ENCODE measurements at regions of chr1 and their contacts with region 1.

Region 1: GRCh38 chr1:115469703-115470476 is 131.8 kb upstream of the NGF start:
- DNase-seq: peak; percentile 21
- H3K4me3 ChIP-seq: no peak overlapping the region
- H3K27ac ChIP-seq: no peak overlapping the region
- H3K4me1 ChIP-seq: no peaks in the 10 kb centered on the region
- H3K27me3 ChIP-seq: no peaks in the 10 kb centered on the region
- CTCF ChIP-seq: peak; percentile 85 to 88
- POLR2A ChIP-seq: no peak

Region 2: DNA sequence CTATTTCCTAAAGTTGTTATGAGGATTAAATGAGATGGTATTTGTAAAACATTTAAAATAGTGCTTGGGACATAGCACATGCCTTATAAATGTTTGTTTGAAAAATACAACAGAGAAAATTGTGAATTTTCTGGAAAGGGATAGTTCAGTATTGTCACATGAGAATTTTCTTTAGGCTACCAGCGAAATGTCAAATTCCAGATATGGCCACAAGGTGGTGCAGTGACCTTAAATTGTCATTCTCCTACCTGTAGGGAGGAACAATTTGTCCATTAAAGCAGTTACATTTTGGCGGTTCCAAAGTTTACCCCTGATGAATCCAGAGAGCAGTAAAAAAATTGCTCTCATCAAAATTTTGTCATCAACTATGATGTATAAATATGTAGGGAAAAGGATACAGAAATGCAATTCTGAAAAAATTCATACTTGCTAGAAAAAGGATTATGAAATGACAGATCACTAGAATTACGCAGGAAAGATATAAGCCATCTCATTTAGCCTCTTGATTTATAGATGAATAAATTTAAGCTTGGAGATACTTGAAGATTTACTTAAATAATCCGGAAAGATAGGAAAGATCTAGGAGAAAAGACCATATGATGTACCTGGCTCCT is 490.5 kb before region 1 on chr1:
- CTCF ChIA-PET with region 1: interaction called, 4 read pairs
- POLR2A ChIA-PET with region 1: no interaction called
- dilution Hi-C with region 1: no loop called
- intact Hi-C with region 1: loop called (anchors 10 kb)
- DNase-seq: peak; percentile 54
- H3K4me3 ChIP-seq: no peak overlapping the region
- H3K27ac ChIP-seq: no peak overlapping the region
- H3K4me1 ChIP-seq: no peaks in the 10 kb centered on the region
- H3K27me3 ChIP-seq: peaks cover 0 to 14% of the 10 kb centered on the region in 2 experiments
- CTCF ChIP-seq: peak; percentile 50 to 60
- POLR2A ChIP-seq: no peak

Region 3: GRCh38 chr1:115138968-115139367 is 330.9 kb before region 1 on chr1:
- CTCF ChIA-PET with region 1: interaction called, 165 read pairs
- POLR2A ChIA-PET with region 1: no interaction called
- dilution Hi-C with region 1: no loop called
- intact Hi-C with region 1: loop called (anchors 1 kb)
- DNase-seq: peak; percentile 79
- H3K4me3 ChIP-seq: no peak overlapping the region
- H3K27ac ChIP-seq: no peak overlapping the region
- H3K4me1 ChIP-seq: no peaks in the 10 kb centered on the region
- H3K27me3 ChIP-seq: peaks cover 0 to 2% of the 10 kb centered on the region in 2 experiments
- CTCF ChIP-seq: peak; percentile 90 to 92
- POLR2A ChIP-seq: no peak

Region 4: GRCh38 chr1:115275212-115275611 is 194.7 kb before region 1 on chr1:
- CTCF ChIA-PET with region 1: interaction called, 9 read pairs
- POLR2A ChIA-PET with region 1: no interaction called
- dilution Hi-C with region 1: no loop called
- intact Hi-C with region 1: loop called (anchors 1 kb)
- DNase-seq: peak; percentile 14
- H3K4me3 ChIP-seq: no peak overlapping the region
- H3K27ac ChIP-seq: no peak overlapping the region
- H3K4me1 ChIP-seq: no peaks in the 10 kb centered on the region
- H3K27me3 ChIP-seq: no peaks in the 10 kb centered on the region
- CTCF ChIP-seq: peak; percentile 24 to 40
- POLR2A ChIP-seq: no peak

Region 5: DNA sequence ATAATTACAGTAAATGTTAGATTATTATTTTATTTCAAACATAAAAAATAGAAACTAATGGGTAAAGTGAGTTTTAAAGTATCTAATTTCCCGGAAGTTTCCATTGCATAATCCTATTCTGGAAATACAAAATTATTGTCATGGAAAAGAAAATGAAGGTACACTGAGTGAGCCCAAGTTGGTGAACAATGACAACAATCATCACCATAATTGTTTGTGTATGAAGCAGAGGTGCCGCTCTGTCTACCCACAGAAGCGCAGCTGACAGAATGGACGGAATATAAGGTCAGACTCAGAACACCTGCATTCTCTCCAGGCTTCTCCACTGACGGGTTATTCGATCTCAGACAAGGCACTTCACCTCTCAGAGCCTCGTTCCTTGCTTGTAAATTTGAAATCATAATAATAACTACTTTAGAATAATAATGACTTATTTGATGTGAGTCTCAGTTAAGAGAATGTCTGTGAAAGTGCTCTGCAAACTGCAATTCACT is 32.7 kb before region 1 on chr1:
- CTCF ChIA-PET with region 1: no interaction called
- POLR2A ChIA-PET with region 1: no interaction called
- dilution Hi-C with region 1: no loop called
- intact Hi-C with region 1: no loop called
- DNase-seq: no peak
- H3K4me3 ChIP-seq: no peak overlapping the region
- H3K27ac ChIP-seq: no peak overlapping the region
- H3K4me1 ChIP-seq: no peaks in the 10 kb centered on the region
- H3K27me3 ChIP-seq: no peaks in the 10 kb centered on the region
- CTCF ChIP-seq: no peak
- POLR2A ChIP-seq: no peak

Region 6: GRCh38 chr1:115448282-115449044 is 21.4 kb before region 1 on chr1:
- CTCF ChIA-PET with region 1: interaction called, 15 read pairs
- POLR2A ChIA-PET with region 1: no interaction called
- dilution Hi-C with region 1: no loop called
- intact Hi-C with region 1: no loop called
- DNase-seq: no peak
- H3K4me3 ChIP-seq: no peak overlapping the region
- H3K27ac ChIP-seq: no peak overlapping the region
- H3K4me1 ChIP-seq: no peaks in the 10 kb centered on the region
- H3K27me3 ChIP-seq: peaks cover 0 to 4% of the 10 kb centered on the region in 2 experiments
- CTCF ChIP-seq: no peak
- POLR2A ChIP-seq: no peak

Measured in endothelial cell of umbilical vein (primary cell).